MCF 10A (cell line): ENCODE measurements at regions of chr3 and their contacts with region 1.

Region 1: DNA sequence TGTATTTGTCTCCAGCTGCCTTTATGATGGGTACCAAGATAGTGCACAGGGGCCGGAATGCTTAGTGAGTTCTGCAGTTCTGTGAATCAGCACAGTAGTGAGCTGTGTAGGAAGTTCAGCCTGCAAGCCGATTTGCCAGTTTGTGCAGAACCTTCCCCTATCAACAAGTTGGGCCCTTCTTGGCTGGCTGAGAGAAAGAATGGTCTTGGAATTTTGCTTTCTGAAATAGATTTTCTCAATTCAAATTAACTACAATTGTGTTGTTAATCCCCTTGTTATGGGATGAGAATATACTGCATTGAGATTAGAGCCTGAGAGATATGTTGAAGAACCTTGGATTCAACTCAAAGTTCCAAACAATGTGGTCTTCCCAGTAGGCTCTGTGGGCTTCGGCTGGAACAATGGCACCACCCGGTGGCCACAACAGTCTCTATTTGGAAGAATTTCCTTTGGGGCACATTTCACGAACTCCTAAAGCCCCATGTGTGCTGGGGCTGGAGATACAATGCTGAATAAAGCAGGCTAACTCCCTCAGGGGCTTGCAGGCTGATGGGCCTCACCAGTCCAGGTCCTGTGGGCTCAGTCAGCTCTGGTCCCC is 59.1 kb downstream of the TRIM42 start:
- DNase-seq: peak; percentile 36
- H3K4me3 Mint-ChIP-seq: no peak overlapping the region
- H3K27ac Mint-ChIP-seq: no peak overlapping the region
- H3K4me1 Mint-ChIP-seq: no peaks in the 10 kb centered on the region
- H3K27me3 Mint-ChIP-seq: peaks cover 27% of the 10 kb centered on the region
- CTCF ChIP-seq: peak; percentile 61

Region 2: DNA sequence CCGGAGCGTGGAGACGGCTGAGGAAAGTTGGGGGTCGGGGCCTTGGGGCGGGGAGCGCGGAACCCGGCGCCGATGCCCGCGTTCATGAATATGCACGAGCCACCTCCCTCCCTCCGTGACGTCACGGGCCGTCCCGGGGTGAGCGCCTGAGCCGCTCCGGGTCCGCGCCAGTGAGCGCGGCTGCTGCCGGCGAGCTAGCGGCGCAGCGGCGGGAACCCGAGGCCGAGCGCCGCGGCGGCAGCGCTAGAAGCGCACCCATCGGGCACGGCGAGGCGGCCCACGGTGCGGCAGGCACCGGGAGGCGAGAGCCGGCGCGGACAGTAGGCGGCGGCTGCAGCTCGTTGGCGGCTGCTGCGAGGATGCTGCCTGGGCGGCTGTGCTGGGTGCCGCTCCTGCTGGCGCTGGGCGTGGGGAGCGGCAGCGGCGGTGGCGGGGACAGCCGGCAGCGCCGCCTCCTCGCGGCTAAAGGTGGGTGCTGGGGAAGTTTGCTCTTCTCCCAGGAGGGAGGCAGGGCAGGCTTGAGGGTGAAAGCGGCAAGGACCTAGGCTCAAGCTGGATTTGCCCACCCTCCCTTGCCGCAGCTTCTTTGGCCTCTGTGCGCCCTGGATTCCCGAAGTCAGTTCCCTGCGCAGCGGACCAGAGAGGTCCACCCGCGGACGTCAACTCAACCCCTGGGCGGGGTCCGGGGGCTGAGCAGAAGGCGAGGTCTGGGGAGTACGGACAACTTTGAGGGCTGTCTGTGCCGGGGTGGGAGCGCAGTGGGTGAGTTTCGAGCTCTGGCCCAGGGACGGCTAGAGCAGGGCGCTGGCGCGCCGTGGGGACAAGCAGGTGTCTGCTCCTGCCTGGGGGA is 801.7 kb before region 1 on chr3 and contains the start of gene CLSTN2:
- CTCF ChIA-PET with region 1: interaction called, 3 read pairs
- POLR2A ChIA-PET with region 1: no interaction called
- intact Hi-C with region 1: loop called (anchors 2 kb)
- DNase-seq: no peak
- H3K4me3 Mint-ChIP-seq: no peak within 1 kb of the TSS
- H3K27ac Mint-ChIP-seq: no peak within 1 kb of the TSS
- H3K4me1 Mint-ChIP-seq: no peaks in the 10 kb centered on the region
- H3K27me3 Mint-ChIP-seq: peaks cover 30% of the 10 kb centered on the region
- CTCF ChIP-seq: no peak
- total RNA-seq, gene CLSTN2: not detected in 2 replicates

Region 3: GRCh38 chr3:140128631-140129030 is 608.3 kb before region 1 on chr3:
- CTCF ChIA-PET with region 1: no interaction called
- POLR2A ChIA-PET with region 1: no interaction called
- intact Hi-C with region 1: loop called (anchors 1 kb)
- DNase-seq: peak; percentile 56
- H3K4me3 Mint-ChIP-seq: no peak overlapping the region
- H3K27ac Mint-ChIP-seq: no peak overlapping the region
- H3K4me1 Mint-ChIP-seq: no peaks in the 10 kb centered on the region
- H3K27me3 Mint-ChIP-seq: no peaks in the 10 kb centered on the region
- CTCF ChIP-seq: peak; percentile 26

Region 4: GRCh38 chr3:140363801-140364200 is 373.2 kb before region 1 on chr3:
- CTCF ChIA-PET with region 1: no interaction called
- POLR2A ChIA-PET with region 1: no interaction called
- intact Hi-C with region 1: loop called (anchors 1 kb)
- DNase-seq: peak; percentile 47
- H3K4me3 Mint-ChIP-seq: no peak overlapping the region
- H3K27ac Mint-ChIP-seq: no peak overlapping the region
- H3K4me1 Mint-ChIP-seq: no peaks in the 10 kb centered on the region
- H3K27me3 Mint-ChIP-seq: peaks cover 28% of the 10 kb centered on the region
- CTCF ChIP-seq: no peak

Region 5: GRCh38 chr3:140552898-140553297 is 184.1 kb before region 1 on chr3:
- CTCF ChIA-PET with region 1: interaction called, 4 read pairs
- POLR2A ChIA-PET with region 1: no interaction called
- intact Hi-C with region 1: loop called (anchors 1 kb)
- DNase-seq: peak; percentile 57
- H3K4me3 Mint-ChIP-seq: no peak overlapping the region
- H3K27ac Mint-ChIP-seq: no peak overlapping the region
- H3K4me1 Mint-ChIP-seq: peaks cover 5% of the 10 kb centered on the region
- H3K27me3 Mint-ChIP-seq: no peaks in the 10 kb centered on the region
- CTCF ChIP-seq: no peak

Region 6: GRCh38 chr3:140863580-140864009 is 126.6 kb after region 1 on chr3:
- CTCF ChIA-PET with region 1: no interaction called
- POLR2A ChIA-PET with region 1: interaction called, 3 read pairs
- intact Hi-C with region 1: loop called (anchors 5 kb)
- DNase-seq: peak; percentile 69
- H3K4me3 Mint-ChIP-seq: no peak overlapping the region
- H3K27ac Mint-ChIP-seq: no peak overlapping the region
- H3K4me1 Mint-ChIP-seq: no peaks in the 10 kb centered on the region
- H3K27me3 Mint-ChIP-seq: peaks cover 25% of the 10 kb centered on the region
- CTCF ChIP-seq: peak; percentile 60